Activated CD8-positive, alpha-beta memory T cell treated with anti-CD3 and anti-CD28 coated beads, Interleukin-2, amount 10 ng/mL, durations not matched to agents 7 days and 5 days (primary cell): ENCODE measurements at regions of chr1 and their contacts with region 1.

Region 1: GRCh38 chr1:71080739-71081696 is at the start of gene ZRANB2:
- DNase-seq: peak; percentile 95
- ATAC-seq: peak; percentile 98
- H3K4me3 Mint-ChIP-seq: peak within 1 kb of the TSS; percentile 97
- H3K27ac Mint-ChIP-seq: peak within 1 kb of the TSS; percentile 99
- H3K4me1 Mint-ChIP-seq: peaks cover 28% of the 10 kb centered on the region
- H3K27me3 Mint-ChIP-seq: peaks cover 6% of the 10 kb centered on the region
- total RNA-seq, gene ZRANB2: 118 to 119 TPM

Region 2: DNA sequence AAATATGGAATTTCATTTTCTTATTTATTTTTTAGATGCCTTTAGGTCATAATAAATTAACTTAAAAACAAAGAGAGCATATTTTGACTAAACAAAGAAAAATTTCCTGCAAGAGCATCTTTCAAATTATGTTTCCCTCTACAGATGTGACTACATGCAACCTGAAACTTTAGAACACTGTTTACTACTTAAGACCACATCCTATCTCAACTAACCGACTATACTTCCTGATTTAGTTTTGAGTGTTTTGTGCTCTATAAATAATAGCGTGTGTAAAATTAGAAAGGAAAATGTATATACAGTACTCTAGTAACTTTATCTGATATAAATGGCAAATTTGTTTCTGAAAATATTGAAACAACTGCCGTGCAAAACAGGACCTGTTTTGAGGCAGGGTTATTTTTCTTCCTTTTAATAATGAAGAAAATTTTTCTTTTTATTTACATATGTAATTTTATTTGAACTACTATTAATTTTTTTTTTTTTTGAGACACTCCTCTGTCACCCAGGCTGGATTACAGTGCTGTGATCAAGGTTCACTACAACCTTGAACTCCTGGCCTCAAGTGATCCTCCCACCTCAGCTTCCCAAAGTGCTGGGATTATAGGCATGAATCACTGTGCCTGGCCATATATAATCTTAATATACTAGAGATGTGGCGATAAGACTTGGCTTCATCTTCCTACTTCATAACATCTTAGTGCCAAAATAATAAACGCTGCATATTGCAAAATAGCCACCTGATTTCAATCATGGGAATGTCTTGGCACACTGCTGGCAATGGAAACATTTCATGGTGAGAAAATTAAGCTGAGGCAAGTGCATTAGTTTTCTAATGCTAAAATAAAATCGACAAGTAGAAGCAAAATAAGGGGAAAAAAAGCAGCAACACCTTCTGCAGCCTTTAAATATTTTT is 12.4 kb before region 1 on chr1:
- CTCF ChIA-PET with region 1: interaction called, 11 read pairs
- DNase-seq: no peak
- ATAC-seq: peak; percentile 97
- H3K4me3 Mint-ChIP-seq: peak overlapping the region; percentile 18
- H3K27ac Mint-ChIP-seq: peak overlapping the region; percentile 75
- H3K4me1 Mint-ChIP-seq: peaks cover 28% of the 10 kb centered on the region
- H3K27me3 Mint-ChIP-seq: no peaks in the 10 kb centered on the region